ENCODE measurements at regions of chr13 and their contacts with region 1.

Region 1: GRCh38 chr13:32164622-32165268 is 133.2 kb downstream of the FRY start:
- DNase-seq: peak; percentile 22
- CTCF ChIP-seq: no peak

Region 2: GRCh38 chr13:32175307-32175706 is 10.6 kb after region 1 on chr13:
- CTCF ChIA-PET with region 1: interaction called, 28 read pairs
- POLR2A ChIA-PET with region 1: no interaction called
- DNase-seq: no peak
- CTCF ChIP-seq: no peak

Region 3: DNA sequence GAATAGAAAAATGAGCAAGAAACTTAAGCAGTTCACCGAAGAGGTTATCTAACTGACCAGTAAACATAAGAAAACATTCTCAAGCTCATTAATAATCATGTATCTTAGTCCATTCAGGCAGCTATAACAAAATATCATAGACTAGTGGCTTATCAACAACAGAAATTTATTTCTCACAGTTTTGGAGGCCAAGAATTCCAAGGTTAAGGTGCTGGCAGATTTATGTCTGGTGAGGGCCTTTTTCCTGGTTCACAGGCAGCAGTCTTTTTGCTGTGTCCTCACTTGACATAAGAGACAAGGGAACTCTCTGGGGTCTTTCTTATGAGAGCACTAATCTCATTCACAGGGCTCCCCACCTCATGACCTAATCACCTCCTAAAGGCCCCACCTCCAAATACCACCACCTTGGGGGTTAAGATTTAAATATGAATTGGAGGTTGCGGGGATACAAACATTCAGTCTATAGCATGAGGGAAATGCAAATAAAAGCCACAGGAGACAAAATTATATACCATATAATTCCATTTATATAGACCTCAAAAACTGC is 26.8 kb after region 1 on chr13:
- CTCF ChIA-PET with region 1: interaction called, 14 read pairs
- POLR2A ChIA-PET with region 1: no interaction called
- DNase-seq: no peak
- CTCF ChIP-seq: no peak

Measured in GM10248 (cell line).